Activated T-helper 2 cell treated with anti-CD3 and anti-CD28 coated beads, Interferon-gamma antibody, Interleukin-2, Interleukin-4, amounts not matched to agents 10 μg/mL and 5 μg/mL and 100 μg/mL, durations not matched to agents 14 hours and 24 hours and 36 hours (primary cell): ENCODE measurements at regions of chr19 and their contacts with region 1.

Region 1: DNA sequence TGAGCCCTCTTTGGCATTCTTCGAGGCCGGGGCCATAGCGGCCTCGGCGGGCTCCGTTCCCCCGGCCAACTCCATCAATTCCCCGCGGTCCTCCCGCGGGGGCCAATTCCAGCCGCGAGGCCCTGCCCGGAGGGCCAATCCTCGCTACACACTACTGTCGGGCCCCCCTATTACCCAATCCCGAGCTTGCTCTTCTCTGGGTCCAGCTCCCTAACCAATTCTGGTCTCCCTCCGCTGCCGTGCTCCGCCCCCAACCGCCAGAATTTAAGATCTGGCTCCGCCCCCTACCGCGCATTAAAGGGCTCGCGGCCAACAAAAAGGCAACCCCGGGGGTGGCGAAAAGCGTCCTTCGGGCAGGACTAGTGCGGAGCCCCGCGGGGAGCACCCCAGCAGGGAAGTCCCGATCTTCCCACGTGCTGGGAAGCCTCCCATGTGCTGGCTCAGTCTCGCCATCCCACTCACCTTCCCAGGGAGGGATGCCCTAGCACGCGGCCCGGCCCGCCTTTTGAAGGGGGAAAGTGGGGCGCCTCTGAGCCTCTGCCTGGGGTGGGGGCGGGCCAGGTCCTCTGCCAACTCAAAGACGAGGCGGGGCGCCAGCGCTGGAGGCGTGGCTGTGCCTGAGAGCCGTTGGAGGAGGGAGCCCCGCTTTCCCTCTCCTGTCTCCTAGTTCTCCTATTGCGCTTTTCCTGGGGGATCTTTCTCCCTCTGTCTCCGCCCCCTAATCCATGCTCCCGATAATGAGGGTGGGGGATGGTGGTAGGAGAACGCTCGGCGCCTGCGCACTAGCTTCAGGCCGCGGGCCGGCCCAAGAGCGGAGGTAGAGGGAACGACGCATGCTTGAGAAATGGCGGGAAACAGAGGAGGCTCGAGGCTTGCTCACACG is 3.5 kb downstream of the LIPE start:
- DNase-seq: peak; percentile 94
- H3K4me3 Mint-ChIP-seq: peak overlapping the region; percentile 99
- H3K27ac Mint-ChIP-seq: peak overlapping the region; percentile 89
- H3K4me1 Mint-ChIP-seq: peaks cover 33% of the 10 kb centered on the region
- H3K27me3 Mint-ChIP-seq: peaks cover 2% of the 10 kb centered on the region

Region 2: GRCh38 chr19:42401365-42402303 is 22.1 kb before region 1 on chr19:
- intact Hi-C with region 1: loop called (anchors 2 kb)
- DNase-seq: peak; percentile 54
- H3K4me3 Mint-ChIP-seq: peak overlapping the region; percentile 71
- H3K27ac Mint-ChIP-seq: no peak overlapping the region
- H3K4me1 Mint-ChIP-seq: peaks cover 29% of the 10 kb centered on the region
- H3K27me3 Mint-ChIP-seq: no peaks in the 10 kb centered on the region

Region 3: DNA sequence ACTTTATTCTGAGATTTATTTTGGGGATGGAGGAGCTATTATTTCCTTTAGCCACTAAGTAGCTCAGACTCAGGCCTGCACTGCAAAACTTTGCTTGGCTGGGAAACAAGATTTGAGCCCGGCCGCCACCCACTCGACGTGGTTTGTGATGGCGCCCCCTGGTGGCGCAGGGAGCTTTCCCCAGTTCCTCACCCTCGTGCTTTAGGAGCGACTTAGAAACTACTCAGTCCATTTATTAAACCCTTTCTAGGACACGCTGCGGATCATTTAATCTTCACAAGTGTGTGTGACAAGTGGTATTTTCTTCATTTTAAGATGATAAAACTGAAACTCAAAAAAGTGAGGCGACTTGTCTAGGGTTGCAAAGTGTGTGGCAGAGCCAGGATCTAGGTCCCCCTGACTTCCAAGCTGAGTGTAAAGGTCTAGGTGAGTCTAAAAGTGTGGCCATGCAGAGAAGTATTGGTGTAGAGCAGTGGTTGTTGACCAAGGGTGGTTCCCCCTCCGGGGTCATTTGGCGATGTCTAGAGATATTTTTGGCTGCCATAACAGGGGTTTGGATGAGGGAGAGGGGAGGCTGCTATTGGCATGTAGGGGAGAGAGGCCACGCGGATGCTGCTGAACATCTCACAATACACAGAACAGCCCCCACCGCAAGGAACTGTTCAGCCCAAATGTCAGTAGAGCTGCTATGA is 16.8 kb after region 1 on chr19:
- intact Hi-C with region 1: loop called (anchors 2 kb)
- DNase-seq: peak; percentile 68
- H3K4me3 Mint-ChIP-seq: no peak overlapping the region
- H3K27ac Mint-ChIP-seq: peak overlapping the region; percentile 5
- H3K4me1 Mint-ChIP-seq: peaks cover 24% of the 10 kb centered on the region
- H3K27me3 Mint-ChIP-seq: no peaks in the 10 kb centered on the region